AG04449 (cell line): ENCODE measurements at regions of chr10 and their contacts with region 1.

Region 1: DNA sequence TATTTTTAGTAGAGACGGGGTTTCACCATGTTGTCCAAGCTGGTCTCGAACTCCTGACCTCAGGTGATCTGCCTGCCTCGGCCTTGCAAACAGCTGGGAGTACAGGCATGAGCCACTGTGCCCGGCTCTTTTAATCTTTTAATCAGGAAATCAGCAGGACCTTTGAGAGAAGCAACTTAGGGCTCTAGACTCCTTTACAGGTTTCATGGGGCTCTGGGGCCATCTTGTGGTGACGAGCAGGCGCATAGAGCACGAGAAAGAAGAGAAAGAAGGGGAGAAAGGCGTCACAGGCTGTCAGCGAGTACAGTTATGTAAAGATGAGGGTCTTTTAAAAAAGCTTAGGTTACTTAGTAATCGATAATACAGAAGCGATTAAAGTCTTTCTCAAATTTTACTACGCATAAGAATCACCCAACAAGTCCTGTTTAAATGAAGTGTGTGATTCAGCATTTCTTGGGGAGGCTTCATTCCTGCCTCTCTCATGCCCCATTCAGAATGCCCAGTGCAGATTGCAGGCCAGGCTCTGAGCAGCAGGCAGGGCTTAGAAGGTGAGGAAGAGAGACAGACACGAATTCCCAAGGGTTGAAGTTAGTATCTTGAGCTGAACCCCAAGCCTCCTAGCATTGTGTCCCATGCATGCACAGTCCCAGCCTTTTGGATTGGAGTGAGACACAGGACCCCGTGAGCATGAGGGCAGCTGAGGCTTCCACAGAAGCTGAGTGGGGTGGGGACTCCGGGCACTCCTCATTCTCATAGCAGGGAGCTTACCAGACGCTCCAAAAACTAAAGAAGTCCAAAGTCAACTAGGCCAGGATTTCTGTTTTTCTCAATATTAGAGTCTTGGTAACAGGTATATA is 23.6 kb upstream of the PFKP start:
- DNase-seq: no peak
- H3K4me3 ChIP-seq: no peak overlapping the region
- CTCF ChIP-seq: peak; percentile 78

Region 2: DNA sequence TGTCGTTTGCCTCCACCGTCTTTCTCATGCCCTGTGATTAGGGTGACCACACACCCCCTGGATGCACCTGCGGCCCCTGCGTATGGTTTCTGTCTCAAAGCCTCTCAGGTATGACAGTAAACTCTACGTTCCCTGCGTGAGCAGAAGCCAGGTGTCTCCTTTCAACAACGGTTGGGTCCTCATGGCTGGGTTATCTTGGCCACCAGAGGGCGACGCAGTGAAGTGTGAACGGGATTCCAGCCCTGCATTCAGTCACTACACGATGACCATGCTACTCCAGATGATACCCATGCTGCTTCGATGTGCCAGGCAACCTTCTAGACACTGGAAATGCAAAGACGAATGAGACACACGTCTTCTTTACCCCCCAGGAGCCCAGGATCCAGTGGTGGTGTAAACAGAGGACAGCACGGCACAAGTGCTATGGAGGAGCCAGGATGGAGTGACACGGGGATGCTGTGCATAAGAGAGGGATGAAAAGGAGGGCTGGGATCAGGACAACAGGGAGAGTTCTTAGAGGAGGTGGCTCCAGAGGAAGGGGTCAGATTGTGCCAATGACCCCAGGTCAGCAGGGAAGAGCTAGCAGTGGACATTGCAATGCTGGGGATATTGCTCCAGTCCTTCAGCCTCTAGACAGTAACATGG is 204.5 kb before region 1 on chr10:
- CTCF ChIA-PET with region 1: interaction called, 37 read pairs
- POLR2A ChIA-PET with region 1: no interaction called
- DNase-seq: no peak
- H3K4me3 ChIP-seq: no peak overlapping the region
- CTCF ChIP-seq: peak; percentile 54

Region 3: DNA sequence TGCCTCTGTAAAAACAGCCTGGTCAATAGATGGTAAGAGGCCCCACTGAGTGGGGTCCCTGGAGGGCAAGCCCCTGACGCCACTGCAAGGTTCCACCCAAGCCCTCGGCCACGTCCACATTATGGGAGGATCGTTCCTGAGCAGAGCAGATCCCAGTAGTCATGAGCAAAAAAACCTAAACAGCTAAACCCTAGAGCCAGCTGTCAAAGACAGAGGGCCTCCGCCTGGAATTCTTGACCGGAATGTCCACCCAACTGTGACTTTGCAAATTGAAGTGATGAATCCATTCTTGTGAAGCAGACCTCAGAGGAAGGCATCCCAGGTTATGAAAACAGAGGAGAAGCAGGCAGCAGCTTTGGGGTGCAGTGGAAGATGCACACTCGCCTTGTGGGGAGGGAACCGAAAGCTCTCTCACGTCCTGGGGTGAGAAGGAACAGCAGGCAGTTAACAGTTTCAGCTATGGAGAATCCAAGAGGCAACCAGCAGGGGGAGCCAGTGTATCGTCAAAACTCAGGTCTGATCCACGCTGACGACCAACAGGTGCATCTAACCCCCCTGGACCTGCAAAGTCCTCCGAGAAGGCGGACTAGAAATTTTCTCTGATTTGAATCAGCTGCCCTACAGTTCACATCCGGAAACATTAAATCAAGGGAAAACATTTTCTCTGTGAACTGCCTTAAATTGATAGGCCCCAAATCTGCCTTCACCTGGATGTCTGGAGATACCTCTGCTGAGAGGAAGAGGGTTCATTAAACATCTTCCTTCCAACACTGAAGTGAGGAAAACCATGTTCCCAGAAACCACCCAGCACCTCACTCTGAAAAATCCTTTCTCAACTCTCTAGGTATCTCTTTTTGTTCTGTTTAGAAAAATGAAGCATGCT is 115.5 kb before region 1 on chr10:
- CTCF ChIA-PET with region 1: interaction called, 258 read pairs
- POLR2A ChIA-PET with region 1: no interaction called
- DNase-seq: peak; percentile 1
- H3K4me3 ChIP-seq: no peak overlapping the region
- CTCF ChIP-seq: peak; percentile 76

Region 4: GRCh38 chr10:2968401-2969058 is 75.2 kb before region 1 on chr10:
- CTCF ChIA-PET with region 1: interaction called, 13 read pairs
- POLR2A ChIA-PET with region 1: no interaction called
- DNase-seq: peak; percentile 28
- H3K4me3 ChIP-seq: no peak overlapping the region
- CTCF ChIP-seq: no peak

Region 5: DNA sequence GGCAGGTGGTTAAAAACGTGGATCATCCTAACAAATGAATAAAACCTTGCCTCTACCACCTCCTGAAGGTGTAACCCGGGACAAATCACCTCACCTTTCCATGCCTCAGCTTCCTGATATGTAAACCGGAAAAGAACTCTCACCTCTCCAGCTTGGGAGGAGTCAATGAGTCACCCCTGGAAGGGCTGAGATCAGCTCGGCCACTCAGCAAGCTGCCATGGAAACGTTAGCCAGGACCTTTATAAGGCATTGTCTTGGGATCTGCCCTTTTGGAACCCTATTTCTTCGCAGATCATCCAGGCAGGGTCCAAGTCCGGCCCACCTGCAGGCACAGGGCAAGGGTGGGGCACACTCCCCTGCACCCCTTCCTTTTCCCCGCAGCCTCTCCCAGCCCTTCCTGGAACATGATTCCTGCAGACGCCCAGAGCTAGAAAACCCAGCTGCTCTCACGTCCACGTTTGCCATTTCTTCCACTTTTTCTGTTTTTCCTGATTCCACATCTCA is 58.0 kb before region 1 on chr10:
- CTCF ChIA-PET with region 1: interaction called, 17 read pairs
- POLR2A ChIA-PET with region 1: no interaction called
- DNase-seq: no peak
- H3K4me3 ChIP-seq: no peak overlapping the region
- CTCF ChIP-seq: no peak

Region 6: DNA sequence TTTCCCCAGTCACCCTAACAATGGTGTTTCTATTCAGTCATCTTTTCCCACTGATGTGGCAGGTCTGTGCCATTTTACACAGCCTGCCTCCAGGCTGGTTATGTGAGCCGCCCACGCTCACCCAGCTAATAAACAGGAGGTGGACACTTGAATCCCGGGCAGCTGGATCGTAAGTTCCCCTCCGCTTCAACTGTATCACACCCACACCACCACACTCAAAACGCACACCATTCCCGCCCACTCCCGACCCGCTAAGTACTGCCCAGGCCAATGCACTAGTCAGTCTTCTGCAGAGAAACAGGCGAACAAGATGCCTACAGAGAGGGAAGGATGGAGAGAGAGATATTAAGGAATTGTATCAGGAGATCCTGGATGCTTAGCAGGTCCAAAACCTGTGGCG is 15.3 kb before region 1 on chr10:
- CTCF ChIA-PET with region 1: interaction called, 39 read pairs
- POLR2A ChIA-PET with region 1: no interaction called
- DNase-seq: no peak
- H3K4me3 ChIP-seq: no peak overlapping the region
- CTCF ChIP-seq: no peak